ENCODE measurements at regions of chrX and their contacts with region 1.

Region 1: GRCh38 chrX:153947009-153947769 is 2.7 kb upstream of the RENBP start:
- DNase-seq: peak; percentile 57 to 87 (median 81)
- ATAC-seq: peak; percentile 87
- H3K4me3 ChIP-seq: no peak overlapping the region
- H3K4me3 Mint-ChIP-seq: peak overlapping the region; percentile 27
- H3K27ac ChIP-seq: peak overlapping the region in 1 of 2 experiments; percentile 53
- H3K27ac Mint-ChIP-seq: peak overlapping the region; percentile 81
- H3K4me1 ChIP-seq: peaks cover 42% of the 10 kb centered on the region
- H3K4me1 Mint-ChIP-seq: peaks cover 13% of the 10 kb centered on the region
- H3K27me3 ChIP-seq: no peaks in the 10 kb centered on the region
- H3K27me3 Mint-ChIP-seq: no peaks in the 10 kb centered on the region
- CTCF ChIP-seq: peak; percentile 71

Region 2: DNA sequence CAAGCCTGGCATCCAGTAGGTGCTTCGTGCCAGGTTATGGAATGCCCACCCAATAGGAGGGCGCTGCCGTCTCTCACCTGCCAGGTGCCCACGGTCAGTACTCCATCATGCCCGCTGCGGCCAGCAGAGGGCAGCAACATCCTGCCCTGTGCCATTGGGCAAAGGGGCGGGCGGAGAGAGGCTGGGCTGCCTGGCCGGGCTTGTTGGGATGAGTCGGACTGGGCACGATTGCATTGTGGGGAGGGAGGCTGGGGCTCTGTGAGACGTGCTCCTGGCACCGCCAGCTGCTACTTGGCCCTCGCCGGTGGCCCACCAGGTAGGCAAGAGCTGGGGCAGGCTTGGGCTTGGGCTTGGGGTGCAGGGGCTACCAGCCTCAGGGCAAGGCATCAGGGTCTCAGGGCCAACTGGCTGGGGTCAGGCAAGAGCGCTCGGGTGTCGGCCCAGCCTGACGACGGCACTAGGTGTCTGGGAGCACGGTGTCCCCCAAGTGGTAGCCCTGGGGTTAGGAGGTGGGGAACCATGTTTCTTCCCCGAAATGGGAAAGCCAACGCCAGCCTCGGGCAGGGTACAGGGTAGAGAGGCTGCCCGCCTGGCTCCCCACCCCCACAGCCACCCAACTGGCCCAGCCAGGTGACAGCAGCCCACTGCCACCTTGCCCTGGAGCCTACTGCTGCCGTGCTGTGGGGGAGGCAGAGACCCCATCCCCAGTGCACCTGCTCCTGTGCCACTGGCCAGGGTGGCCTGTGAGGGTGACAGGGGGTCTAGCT is 183.0 kb before region 1 on chrX and contains the start of gene PLXNB3:
- CTCF ChIA-PET with region 1: interaction called, 49 read pairs
- POLR2A ChIA-PET with region 1: no interaction called
- intact Hi-C with region 1: loop called in 1 of 2 experiments (anchors 1 kb)
- DNase-seq: peak; percentile 45 to 89 (median 70)
- ATAC-seq: peak; percentile 88
- H3K4me3 ChIP-seq: no peak within 1 kb of the TSS
- H3K4me3 Mint-ChIP-seq: no peak within 1 kb of the TSS
- H3K27ac ChIP-seq: no peak within 1 kb of the TSS
- H3K27ac Mint-ChIP-seq: no peak within 1 kb of the TSS
- H3K4me1 ChIP-seq: peaks cover 10% of the 10 kb centered on the region
- H3K4me1 Mint-ChIP-seq: peaks cover 10% of the 10 kb centered on the region
- H3K27me3 ChIP-seq: no peaks in the 10 kb centered on the region
- H3K27me3 Mint-ChIP-seq: no peaks in the 10 kb centered on the region
- CTCF ChIP-seq: peak; percentile 52
- total RNA-seq, gene PLXNB3: 0.35 to 0.50 TPM

Region 3: GRCh38 chrX:153900831-153901752 is 46.1 kb before region 1 on chrX:
- CTCF ChIA-PET with region 1: interaction called, 4 read pairs
- POLR2A ChIA-PET with region 1: interaction called, 3 read pairs
- intact Hi-C with region 1: loop called in 1 of 2 experiments (anchors 1 kb)
- DNase-seq: peak; percentile 24 to 87 (median 58)
- ATAC-seq: peak; percentile 87
- H3K4me3 ChIP-seq: no peak overlapping the region
- H3K4me3 Mint-ChIP-seq: peak overlapping the region; percentile 46
- H3K27ac ChIP-seq: no peak overlapping the region
- H3K27ac Mint-ChIP-seq: no peak overlapping the region
- H3K4me1 ChIP-seq: peaks cover 55% of the 10 kb centered on the region
- H3K4me1 Mint-ChIP-seq: peaks cover 42% of the 10 kb centered on the region
- H3K27me3 ChIP-seq: no peaks in the 10 kb centered on the region
- H3K27me3 Mint-ChIP-seq: no peaks in the 10 kb centered on the region
- CTCF ChIP-seq: no peak

Region 4: DNA sequence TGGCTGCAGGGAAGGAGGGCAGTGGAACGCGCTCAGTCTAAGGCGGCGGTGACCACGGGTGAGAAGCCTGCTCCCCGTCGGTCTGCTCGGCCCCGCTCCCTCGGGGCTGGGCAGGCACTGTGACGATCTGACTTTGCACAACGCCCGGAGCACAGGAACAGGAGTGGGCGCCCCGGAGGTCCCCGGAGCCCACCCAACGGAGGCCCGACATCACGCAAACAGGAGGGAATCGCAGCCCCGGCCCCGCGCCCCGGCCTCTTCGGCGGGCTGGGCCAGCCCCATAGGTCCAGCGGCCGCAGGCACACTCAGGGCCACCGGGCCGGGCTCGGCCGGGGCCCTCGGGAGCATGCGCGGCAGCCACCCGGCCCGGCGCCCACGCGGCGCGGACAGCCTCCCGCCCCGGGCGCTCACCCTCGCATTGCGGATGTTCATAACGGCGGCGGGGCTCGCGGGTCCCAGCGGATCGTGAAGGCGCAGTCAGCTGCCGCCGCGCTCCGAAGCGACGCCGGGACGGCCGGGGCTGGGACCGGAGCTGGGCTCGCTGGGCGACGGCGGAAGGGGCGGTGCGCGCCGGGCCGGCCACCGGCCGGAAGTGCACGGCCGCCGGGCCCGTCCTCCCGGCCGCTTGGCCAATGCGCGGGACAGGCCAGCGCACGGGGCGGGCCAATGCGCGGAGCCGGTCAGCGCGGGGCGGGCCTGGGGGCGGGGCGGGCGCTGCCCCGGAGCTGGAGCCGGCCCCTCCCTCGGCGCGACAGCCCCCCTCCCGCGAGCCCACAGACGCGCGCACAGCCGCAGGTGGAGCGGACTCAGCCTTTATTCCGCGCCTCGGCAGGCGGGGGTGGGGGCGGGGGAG is 12.5 kb before region 1 on chrX and contains the start of gene NAA10:
- CTCF ChIA-PET with region 1: interaction called, 205 read pairs
- POLR2A ChIA-PET with region 1: interaction called, 100 read pairs
- intact Hi-C with region 1: no loop called
- DNase-seq: peak in 8 of 9 experiments; percentile 23 to 77 (median 54)
- ATAC-seq: peak; percentile 71
- H3K4me3 ChIP-seq: peak within 1 kb of the TSS; percentile 39 to 54
- H3K4me3 Mint-ChIP-seq: peak within 1 kb of the TSS; percentile 89
- H3K27ac ChIP-seq: peak within 1 kb of the TSS in 1 of 2 experiments; percentile 43
- H3K27ac Mint-ChIP-seq: peak within 1 kb of the TSS; percentile 86
- H3K4me1 ChIP-seq: peaks cover 11% of the 10 kb centered on the region
- H3K4me1 Mint-ChIP-seq: peaks cover 22% of the 10 kb centered on the region
- H3K27me3 ChIP-seq: no peaks in the 10 kb centered on the region
- H3K27me3 Mint-ChIP-seq: no peaks in the 10 kb centered on the region
- CTCF ChIP-seq: no peak
- total RNA-seq, gene NAA10: 34.4 to 35.3 TPM

Region 5: GRCh38 chrX:154097597-154098541 is 150.7 kb after region 1 on chrX and contains the start of gene MECP2:
- CTCF ChIA-PET with region 1: no interaction called
- POLR2A ChIA-PET with region 1: no interaction called
- intact Hi-C with region 1: no loop called
- DNase-seq: peak; percentile 72 to 93 (median 83)
- ATAC-seq: peak; percentile 88
- H3K4me3 ChIP-seq: peak within 1 kb of the TSS; percentile 84 to 85
- H3K4me3 Mint-ChIP-seq: peak within 1 kb of the TSS; percentile 97
- H3K27ac ChIP-seq: peak within 1 kb of the TSS; percentile 88 to 90
- H3K27ac Mint-ChIP-seq: peak within 1 kb of the TSS; percentile 99
- H3K4me1 ChIP-seq: peaks cover 34% of the 10 kb centered on the region
- H3K4me1 Mint-ChIP-seq: peaks cover 34% of the 10 kb centered on the region
- H3K27me3 ChIP-seq: no peaks in the 10 kb centered on the region
- H3K27me3 Mint-ChIP-seq: no peaks in the 10 kb centered on the region
- CTCF ChIP-seq: no peak
- total RNA-seq, gene MECP2: 106 to 204 TPM

Measured in CD8-positive, alpha-beta T cell (primary cell).